ENCODE measurements at regions of chr10 and their contacts with region 1.

Region 1: DNA sequence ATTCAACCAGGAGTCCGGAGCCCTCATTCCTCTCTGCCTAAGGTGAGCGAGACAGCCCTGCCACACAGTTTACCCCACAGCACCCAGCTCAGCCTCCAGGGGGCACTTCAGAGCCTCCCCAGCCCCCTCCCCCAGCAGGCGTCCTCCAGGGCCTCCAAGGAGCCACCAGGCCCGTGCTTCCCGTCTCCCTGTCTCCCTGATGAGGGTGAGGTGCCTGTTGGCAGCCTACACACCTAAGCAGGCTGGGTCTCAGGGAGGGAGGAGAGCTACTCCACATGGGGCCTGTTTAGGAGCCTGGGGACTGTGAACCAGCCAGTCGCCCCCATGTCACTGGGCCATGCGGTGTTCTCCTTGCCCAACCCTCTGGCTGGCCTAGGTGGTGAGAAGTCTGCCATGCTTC is 28.9 kb upstream of the TRIM8 start:
- H3K4me3 ChIP-seq: no peak overlapping the region
- H3K27ac ChIP-seq: no peak overlapping the region
- H3K4me1 ChIP-seq: peaks cover 3% of the 10 kb centered on the region; the same call in 1 of the 2 replicates
- CTCF ChIP-seq: 0 out of 2 replicates have a peak, but pooled peaks have one; percentile 51

Region 2: DNA sequence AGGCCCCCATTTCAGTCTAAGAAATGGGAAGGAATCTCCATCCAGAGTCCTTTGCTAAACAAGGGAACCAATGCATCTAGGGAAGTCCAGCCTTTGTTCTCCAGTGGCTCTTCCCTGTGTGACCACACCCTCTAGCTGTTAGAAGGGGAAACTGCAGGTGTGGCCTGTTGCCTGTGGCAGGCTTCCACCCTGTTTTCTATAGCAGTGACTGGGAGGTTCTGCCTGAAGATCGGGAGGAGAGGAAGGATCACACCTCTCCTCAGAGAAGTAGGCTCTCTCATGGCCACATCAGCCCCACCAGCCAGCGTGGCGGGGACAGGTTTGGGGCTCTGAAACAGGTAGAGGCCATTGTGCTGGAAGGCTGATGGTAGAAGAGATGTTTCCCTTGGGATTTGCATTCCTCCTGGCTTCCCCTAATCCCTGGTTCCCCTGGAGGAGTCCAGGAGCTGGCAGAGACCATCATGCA is 18.8 kb before region 1 on chr10:
- CTCF ChIA-PET with region 1: interaction called, 25 read pairs
- POLR2A ChIA-PET with region 1: no interaction called
- H3K4me3 ChIP-seq: no peak overlapping the region
- H3K27ac ChIP-seq: no peak overlapping the region
- H3K4me1 ChIP-seq: no peaks in the 10 kb centered on the region
- CTCF ChIP-seq: peak; percentile 78; the same call in 1 of the 2 replicates

Region 3: DNA sequence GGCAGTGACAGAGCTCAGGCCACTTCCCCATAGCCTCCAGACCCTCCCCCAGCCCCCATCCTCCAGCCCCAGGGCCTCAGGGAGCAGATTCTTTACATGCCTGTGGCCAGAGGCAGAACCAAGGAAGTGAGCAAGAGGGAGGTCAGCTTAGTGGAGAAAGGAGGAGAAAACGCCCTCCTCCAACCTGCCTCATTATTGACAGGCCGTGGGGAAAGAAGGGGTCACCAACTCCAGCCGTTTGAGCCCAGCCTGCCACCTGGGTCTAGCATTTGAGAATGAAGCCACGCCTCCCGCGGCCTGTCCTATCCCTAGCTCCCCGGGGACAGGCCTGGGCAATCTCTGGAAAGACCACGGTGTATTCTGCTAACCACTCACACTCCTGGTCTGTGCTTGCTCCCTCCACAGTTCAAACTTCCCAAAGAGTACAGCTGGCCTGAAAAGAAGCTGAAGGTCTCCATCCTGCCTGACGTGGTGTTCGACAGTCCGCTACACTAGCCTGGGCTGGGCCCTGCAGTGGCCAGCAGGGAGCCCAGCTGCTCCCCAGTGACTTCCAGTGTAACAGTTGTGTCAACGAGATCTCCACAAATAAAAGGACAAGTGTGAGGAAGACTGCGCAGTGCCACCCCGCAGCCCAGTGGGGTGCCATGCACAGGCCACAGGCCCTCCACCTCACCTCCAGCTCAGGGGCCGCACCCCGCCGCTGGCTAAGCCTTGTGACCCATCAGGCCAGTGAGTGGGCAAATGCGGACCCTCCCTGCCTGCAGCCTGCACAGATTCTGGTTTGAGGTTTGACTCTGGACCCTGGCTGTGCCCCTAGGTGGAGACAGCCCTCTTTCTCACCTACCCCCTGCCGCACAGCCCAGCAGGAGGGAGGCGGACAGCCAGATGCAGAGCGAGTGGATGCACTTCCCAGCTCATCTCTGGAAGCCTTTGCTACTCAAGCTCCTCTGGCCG is 14.6 kb after region 1 on chr10:
- CTCF ChIA-PET with region 1: interaction called, 11 read pairs
- POLR2A ChIA-PET with region 1: no interaction called
- H3K4me3 ChIP-seq: no peak overlapping the region
- H3K27ac ChIP-seq: no peak overlapping the region
- H3K4me1 ChIP-seq: peaks cover 7% of the 10 kb centered on the region
- CTCF ChIP-seq: no peak